Activated CD4-positive, alpha-beta T cell treated with anti-CD3 and anti-CD28 coated beads for 36 hours (primary cell): ENCODE measurements at regions of chrX and their contacts with region 1.

Region 1: DNA sequence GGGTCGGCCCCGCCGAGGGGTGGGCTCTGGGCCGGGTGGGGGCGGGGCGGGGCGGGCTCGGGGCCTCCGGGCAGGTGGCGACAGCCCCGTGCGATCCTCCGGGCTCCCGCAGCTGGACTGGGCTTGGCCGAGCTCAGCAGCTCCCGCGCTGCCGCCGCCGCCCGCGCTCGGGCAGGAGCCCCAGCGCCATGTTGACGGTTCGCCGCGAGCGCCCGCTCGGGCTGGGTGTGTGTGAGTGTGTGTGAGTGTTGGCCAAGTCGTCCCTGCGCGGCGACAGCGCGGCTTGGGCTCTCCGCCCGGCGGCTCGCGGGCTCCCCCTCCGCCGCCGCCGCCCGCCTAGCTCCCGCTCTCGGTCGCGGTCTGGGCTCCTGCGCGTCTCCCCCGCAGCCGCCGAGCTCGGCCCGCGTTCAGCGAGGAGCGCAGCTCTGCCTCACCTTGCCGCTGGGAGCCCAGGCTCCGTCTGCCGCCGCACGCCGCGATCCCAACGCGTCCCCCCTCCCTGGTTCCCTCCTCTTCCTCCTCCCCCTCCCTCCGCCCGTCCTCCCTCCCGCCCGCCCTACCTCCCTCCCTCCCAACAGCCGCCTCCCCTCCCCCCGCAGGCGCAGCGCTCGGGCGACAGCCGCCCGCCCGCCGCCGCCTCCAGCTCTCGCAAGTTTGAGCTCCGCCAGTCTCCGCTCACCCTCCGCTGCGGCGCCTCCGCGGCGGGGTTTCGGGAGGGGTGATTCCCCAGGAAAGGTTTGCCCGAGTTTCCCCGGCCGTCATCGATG is at the start of gene BCOR:
- DNase-seq: peak; percentile 88
- ATAC-seq: peak; percentile 40
- H3K4me3 Mint-ChIP-seq: peak within 1 kb of the TSS; percentile 86
- H3K27ac Mint-ChIP-seq: peak within 1 kb of the TSS; percentile 77
- H3K4me1 Mint-ChIP-seq: peaks cover 22% of the 10 kb centered on the region
- H3K27me3 Mint-ChIP-seq: no peaks in the 10 kb centered on the region
- total RNA-seq, gene BCOR: 34.7 to 51.1 TPM

Region 2: DNA sequence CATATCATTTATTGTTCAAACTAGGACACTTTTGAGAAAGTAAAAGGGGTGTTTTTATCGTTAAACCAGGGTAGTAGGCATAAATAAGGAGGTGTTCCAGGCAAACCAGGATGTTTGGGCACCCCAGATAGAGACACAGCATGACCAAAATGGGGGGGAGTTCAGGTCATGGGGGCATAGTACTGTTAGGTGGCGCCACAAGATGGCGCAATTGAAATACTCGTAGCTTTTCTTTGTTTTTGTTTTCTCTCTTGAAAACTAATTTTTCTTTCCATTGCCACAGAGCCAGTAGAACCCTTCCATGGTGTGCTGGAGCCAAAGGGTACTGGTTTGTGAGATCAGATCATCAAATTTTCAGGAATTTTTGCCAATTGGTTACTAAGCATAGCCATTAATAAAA is 283.3 kb before region 1 on chrX:
- CTCF ChIA-PET with region 1: interaction called, 3 read pairs
- POLR2A ChIA-PET with region 1: no interaction called
- intact Hi-C with region 1: loop called (anchors 5 to 10 kb)
- DNase-seq: peak; percentile 58
- ATAC-seq: no peak
- H3K4me3 Mint-ChIP-seq: no peak overlapping the region
- H3K27ac Mint-ChIP-seq: no peak overlapping the region
- H3K4me1 Mint-ChIP-seq: peaks cover 29% of the 10 kb centered on the region
- H3K27me3 Mint-ChIP-seq: no peaks in the 10 kb centered on the region

Region 3: DNA sequence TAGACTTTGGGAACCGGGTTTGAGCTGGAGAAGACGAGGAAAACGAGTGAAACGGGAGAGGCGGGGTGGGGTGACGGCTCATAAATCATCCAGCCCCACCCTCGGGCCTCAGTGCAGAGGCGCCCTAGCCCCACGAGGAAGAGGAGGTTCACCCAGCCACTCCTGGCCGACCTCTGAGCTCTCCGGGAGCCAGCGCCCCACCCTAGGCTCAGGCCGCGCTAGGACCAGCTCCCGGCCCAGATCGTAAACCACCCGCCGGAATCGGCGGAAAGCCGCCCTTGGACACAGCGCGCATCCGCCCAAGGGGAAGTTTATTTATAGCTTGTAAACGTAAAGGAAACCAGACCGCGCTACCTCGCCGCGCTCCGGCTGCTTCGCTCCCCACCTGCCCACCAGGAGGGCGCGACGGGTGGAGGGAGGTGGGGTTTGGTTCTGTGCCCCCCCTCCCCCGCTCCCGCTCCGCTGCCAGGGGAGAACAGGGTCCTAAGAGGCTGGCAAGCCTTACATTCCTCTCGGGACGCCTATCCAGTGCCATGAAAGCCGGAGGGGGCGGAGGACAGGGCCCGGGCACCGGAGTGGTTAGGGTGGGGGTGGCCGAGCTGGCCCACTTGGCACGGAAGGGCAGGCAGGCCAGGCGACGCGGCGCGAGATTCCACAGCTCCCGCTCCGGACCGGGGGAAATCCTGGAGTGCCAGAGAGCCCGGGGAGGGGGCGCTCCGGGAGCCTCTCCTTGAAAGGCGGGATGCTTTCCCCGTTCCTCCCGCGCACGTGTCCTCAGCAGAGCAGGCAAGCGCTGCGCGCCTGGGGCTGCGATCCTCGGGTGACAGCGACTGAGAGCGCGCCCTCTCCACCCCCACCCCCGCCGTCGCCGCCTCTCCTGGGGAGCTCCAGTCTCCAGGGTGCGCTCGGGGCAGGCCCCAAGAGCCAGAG is 84.1 kb before region 1 on chrX:
- CTCF ChIA-PET with region 1: no interaction called
- POLR2A ChIA-PET with region 1: no interaction called
- intact Hi-C with region 1: loop called (anchors 2 to 5 kb)
- DNase-seq: peak; percentile 58
- ATAC-seq: peak; percentile 35
- H3K4me3 Mint-ChIP-seq: peak overlapping the region; percentile 63
- H3K27ac Mint-ChIP-seq: peak overlapping the region; percentile 31
- H3K4me1 Mint-ChIP-seq: peaks cover 25% of the 10 kb centered on the region
- H3K27me3 Mint-ChIP-seq: peaks cover 16% of the 10 kb centered on the region

Region 4: DNA sequence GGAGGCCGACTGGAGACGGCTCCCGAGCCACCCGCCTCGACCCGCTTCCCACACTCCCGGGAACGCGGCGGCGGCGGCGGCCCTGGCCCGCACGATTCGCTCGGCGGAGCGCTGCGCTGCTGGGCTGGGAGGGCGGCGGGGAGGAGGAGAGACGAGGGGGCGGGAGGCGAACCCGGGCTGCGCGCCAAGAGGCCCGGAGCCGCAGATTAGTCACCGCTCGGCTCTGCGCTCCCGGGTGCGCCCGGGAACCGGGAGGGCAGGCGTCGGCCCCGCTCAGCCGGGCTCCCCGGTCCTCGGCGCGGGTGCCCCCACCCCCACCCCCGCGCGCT is 11.2 kb after region 1 on chrX:
- CTCF ChIA-PET with region 1: no interaction called
- POLR2A ChIA-PET with region 1: interaction called, 4 read pairs
- intact Hi-C with region 1: loop called (anchors 1 kb)
- DNase-seq: peak; percentile 83
- ATAC-seq: peak; percentile 60
- H3K4me3 Mint-ChIP-seq: peak overlapping the region; percentile 46
- H3K27ac Mint-ChIP-seq: no peak overlapping the region
- H3K4me1 Mint-ChIP-seq: peaks cover 9% of the 10 kb centered on the region
- H3K27me3 Mint-ChIP-seq: peaks cover 4% of the 10 kb centered on the region

Region 5: DNA sequence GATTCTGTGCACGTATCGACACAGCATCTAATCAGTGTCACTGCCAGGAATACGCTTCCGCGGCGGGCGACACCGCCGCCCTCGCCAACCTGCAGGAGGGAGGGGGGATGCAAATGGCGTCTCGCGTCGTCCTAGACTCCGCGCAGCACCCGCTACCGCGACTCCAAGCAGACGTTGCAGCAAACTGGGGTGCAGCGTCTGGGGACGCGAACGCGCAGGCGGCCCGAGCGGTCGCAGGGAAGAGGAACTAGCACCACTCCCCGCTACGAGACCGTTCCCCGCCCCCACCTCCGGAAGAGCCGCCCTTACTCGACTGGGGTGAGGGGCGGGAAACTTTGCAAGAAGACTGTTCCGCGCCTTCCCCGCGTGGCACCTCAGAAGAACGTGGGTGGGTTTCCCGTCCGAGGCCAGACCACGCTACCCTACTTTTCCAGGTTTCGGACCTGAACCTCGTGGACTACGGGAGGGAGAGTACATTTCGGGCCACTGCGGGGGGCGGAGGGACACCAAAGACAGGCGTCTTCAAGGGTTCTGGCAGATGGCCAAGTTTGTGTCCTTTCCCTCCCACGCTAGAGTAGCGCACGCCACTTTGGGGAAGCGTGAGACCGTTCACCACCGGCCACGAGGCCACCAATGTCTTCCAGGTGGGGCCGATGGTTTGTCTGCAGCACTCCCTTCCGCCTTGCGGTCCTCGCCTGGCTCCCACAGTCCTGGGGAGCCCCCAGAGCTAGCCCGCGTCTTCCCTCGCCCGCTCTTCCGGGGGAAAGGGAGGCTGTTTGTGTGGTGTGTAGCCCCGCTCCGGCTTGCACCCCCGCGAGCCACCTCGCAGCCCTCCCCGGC is 78.1 kb after region 1 on chrX:
- CTCF ChIA-PET with region 1: interaction called, 3 read pairs
- POLR2A ChIA-PET with region 1: interaction called, 8 read pairs
- intact Hi-C with region 1: loop called (anchors 1 to 2 kb)
- DNase-seq: peak; percentile 84
- ATAC-seq: peak; percentile 37
- H3K4me3 Mint-ChIP-seq: peak overlapping the region; percentile 80
- H3K27ac Mint-ChIP-seq: peak overlapping the region; percentile 99
- H3K4me1 Mint-ChIP-seq: peaks cover 25% of the 10 kb centered on the region
- H3K27me3 Mint-ChIP-seq: no peaks in the 10 kb centered on the region